Panc1 (cell line): ENCODE measurements at regions of chr10 and their contacts with region 1.

Region 1: GRCh38 chr10:71268247-71268691 is 50.8 kb upstream of the SLC29A3 start:
- DNase-seq: no peak
- ATAC-seq: 0 out of 2 replicates have a peak, but pooled peaks have one; percentile 49
- H3K4me3 ChIP-seq: no peak overlapping the region
- H3K27ac ChIP-seq: no peak overlapping the region; the same call in 1 of the 2 replicates
- H3K4me1 ChIP-seq: peaks cover 9% of the 10 kb centered on the region
- H3K27me3 ChIP-seq: no peaks in the 10 kb centered on the region
- CTCF ChIP-seq: no peak; the same call in 1 of the 2 replicates

Region 2: DNA sequence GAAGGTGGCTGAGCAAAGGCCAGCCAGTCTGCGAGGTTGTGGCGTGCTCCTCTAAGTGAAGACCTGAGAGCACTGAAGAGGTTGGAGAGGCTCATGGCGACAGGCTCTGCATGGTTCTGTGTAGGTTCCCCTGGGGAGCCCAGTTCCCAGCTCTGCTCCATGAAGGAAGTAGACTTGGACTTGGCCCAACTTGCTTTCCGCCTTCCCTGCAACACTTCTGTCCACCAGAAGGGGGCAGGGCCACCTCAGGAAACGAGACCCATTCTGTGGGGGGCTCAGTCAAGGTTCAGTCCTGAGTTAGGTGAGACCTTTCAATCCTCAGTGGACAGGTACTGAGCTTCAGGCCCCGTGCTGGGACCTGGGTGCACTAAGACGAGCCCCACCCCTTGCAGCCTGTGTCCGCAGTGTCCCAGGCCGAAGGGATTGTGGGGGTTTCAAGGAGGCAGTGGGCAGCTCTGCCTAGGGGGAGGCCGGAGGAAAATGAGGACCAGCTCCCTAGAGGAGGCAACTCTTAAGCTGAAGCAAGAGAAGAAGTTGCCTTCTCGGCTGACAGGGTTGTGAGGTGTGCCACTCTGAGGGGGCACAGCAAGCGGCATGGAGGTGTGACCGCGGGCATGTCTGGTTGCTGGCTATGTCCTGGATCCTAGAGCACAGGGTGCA is 364.9 kb before region 1 on chr10:
- CTCF ChIA-PET with region 1: interaction called, 3 read pairs
- POLR2A ChIA-PET with region 1: no interaction called
- in situ Hi-C with region 1: no loop called
- intact Hi-C with region 1: loop called (anchors 5 kb)
- DNase-seq: no peak
- ATAC-seq: peak; percentile 52
- H3K4me3 ChIP-seq: no peak overlapping the region
- H3K27ac ChIP-seq: no peak overlapping the region
- H3K4me1 ChIP-seq: no peaks in the 10 kb centered on the region
- H3K27me3 ChIP-seq: peaks cover 5% of the 10 kb centered on the region; the same call in 1 of the 2 replicates
- CTCF ChIP-seq: peak; percentile 96

Region 3: GRCh38 chr10:70974351-70974901 is 293.8 kb before region 1 on chr10:
- CTCF ChIA-PET with region 1: no interaction called
- POLR2A ChIA-PET with region 1: no interaction called
- in situ Hi-C with region 1: no loop called
- intact Hi-C with region 1: no loop called
- DNase-seq: no peak
- ATAC-seq: peak; percentile 43
- H3K4me3 ChIP-seq: no peak overlapping the region
- H3K27ac ChIP-seq: no peak overlapping the region
- H3K4me1 ChIP-seq: no peaks in the 10 kb centered on the region
- H3K27me3 ChIP-seq: peaks cover 10% of the 10 kb centered on the region
- CTCF ChIP-seq: no peak

Region 4: DNA sequence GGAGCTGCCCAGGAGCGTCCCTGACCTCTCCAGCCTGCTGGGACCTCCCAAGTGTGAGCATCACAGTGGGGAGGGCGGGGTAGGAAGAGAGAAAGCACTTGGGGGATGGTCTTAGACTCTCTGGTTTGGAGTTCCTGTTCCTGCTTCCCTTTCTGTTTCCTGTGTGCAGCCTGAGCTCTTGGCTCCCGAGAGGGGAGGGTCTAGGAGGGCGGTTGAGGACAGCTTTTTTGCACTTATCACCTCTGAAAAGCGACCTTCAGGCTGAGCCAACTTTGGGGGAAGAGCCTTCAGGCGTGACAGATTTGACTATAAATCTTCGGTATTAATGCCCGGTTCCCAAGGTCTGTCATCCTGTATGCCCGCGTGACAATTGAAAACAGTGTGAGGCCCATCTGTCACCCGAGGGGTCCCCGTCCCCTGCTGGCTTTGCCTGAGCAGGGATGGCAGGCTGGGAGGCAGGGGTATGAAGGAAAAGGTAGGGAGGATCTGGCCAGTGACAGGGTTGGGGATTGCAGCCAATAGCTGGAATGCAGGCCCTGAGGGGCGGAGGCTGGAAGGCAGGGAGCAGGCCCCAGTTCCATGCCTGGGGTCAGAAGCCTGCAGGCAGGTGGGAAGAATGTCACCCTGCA is 207.1 kb after region 1 on chr10:
- CTCF ChIA-PET with region 1: no interaction called
- POLR2A ChIA-PET with region 1: no interaction called
- in situ Hi-C with region 1: no loop called
- intact Hi-C with region 1: no loop called
- DNase-seq: no peak
- ATAC-seq: no peak
- H3K4me3 ChIP-seq: no peak overlapping the region
- H3K27ac ChIP-seq: no peak overlapping the region
- H3K4me1 ChIP-seq: no peaks in the 10 kb centered on the region
- H3K27me3 ChIP-seq: peaks cover 14% of the 10 kb centered on the region; the same call in 1 of the 2 replicates
- CTCF ChIP-seq: no peak